ENCODE measurements at regions of chr17 and their contacts with region 1.

Region 1: GRCh38 chr17:57955183-57955931 is at the start of gene CUEDC1:
- DNase-seq: peak; percentile 63
- ATAC-seq: peak; percentile 74
- H3K4me3 Mint-ChIP-seq: peak within 1 kb of the TSS; percentile 49
- H3K27ac Mint-ChIP-seq: no peak within 1 kb of the TSS
- H3K4me1 Mint-ChIP-seq: peaks cover 24% of the 10 kb centered on the region
- H3K27me3 Mint-ChIP-seq: peaks cover 32% of the 10 kb centered on the region
- CTCF ChIP-seq: peak; percentile 38
- total RNA-seq, gene CUEDC1: 0.29 to 0.40 TPM

Region 2: GRCh38 chr17:57987580-57988421 is 32.4 kb after region 1 on chr17 and contains the start of gene VEZF1:
- CTCF ChIA-PET with region 1: interaction called, 10 read pairs
- POLR2A ChIA-PET with region 1: interaction called, 4 read pairs
- intact Hi-C with region 1: loop called (anchors 5 kb)
- DNase-seq: peak; percentile 81
- ATAC-seq: peak; percentile 64
- H3K4me3 Mint-ChIP-seq: peak within 1 kb of the TSS; percentile 87
- H3K27ac Mint-ChIP-seq: peak within 1 kb of the TSS; percentile 91
- H3K4me1 Mint-ChIP-seq: peaks cover 67% of the 10 kb centered on the region
- H3K27me3 Mint-ChIP-seq: no peaks in the 10 kb centered on the region
- CTCF ChIP-seq: no peak
- total RNA-seq, gene VEZF1: 17.9 to 19.6 TPM